ENCODE measurements at regions of chr5 and their contacts with region 1.

Region 1: DNA sequence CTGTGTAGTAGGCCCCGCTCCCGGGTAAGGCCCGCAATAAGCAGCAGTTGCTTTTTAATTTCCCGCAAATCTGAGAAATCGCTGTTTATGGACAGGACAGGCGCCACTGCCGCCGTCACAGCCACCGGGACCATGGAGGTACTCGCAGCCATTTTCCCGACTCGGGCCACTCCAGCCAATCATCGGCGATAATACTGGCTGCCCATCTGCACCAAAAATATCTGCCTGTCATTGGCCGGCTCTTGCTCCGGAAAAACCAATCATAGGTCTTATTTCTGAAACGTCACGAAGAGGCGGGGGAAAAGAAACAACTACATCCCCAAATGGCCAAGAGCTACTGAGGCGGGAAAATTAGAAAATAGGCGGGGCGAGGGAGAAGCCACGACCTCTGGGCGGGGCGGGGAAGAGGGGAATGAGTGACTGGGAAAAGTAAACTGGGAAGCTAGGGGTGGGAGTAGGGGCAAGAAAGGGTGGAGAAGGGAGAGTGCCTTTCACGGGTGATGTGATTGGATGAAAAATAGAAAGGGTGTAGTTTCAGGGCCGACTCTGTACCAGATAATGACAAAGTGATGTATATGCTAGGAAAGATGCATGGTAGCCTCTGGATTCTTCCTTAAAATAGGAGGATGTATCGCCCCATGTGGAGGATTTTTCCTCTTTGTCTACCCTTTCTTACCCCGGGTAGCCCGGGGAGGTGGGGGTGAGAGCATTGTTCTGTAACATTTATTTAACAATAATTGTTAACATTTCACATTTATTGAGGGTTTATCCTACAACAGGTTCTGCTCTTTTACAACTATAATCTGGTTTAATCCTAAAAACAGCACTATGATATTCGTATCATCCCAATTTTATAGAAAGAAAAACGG is at the start of gene CDC23:
- DNase-seq: peak; percentile 100
- H3K4me3 Mint-ChIP-seq: peak within 1 kb of the TSS; percentile 98
- H3K27ac Mint-ChIP-seq: peak within 1 kb of the TSS; percentile 99
- H3K4me1 Mint-ChIP-seq: peaks cover 18% of the 10 kb centered on the region
- H3K27me3 Mint-ChIP-seq: no peaks in the 10 kb centered on the region
- CTCF ChIP-seq: no peak
- total RNA-seq, gene CDC23: 49.7 and 67.1 TPM in 2 replicates

Region 2: DNA sequence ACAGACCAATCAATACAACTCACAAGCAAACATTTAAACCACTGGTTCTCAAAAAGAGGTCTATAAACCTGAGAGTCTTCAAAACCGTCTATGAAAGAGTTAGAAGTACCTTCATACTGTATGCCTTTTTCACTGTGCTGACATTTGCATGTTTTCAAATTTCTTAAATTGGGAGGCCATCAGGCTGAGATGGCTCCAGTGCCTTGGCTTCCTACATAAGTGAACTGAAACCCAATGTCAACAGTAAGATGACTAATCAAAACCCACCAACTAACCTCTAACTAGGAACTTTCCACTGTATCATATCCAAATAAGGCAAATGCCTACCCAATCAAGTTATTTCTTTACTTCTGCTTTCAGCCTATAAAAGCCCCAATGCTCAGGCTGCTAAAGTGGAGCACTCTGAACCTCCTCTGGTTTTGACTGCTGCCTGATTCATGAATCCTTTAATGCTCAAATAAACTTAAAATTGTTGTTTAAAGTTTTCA is 215.6 kb before region 1 on chr5:
- CTCF ChIA-PET with region 1: no interaction called
- POLR2A ChIA-PET with region 1: no interaction called
- intact Hi-C with region 1: no loop called
- DNase-seq: peak; percentile 18
- H3K4me3 Mint-ChIP-seq: no peak overlapping the region
- H3K27ac Mint-ChIP-seq: no peak overlapping the region
- H3K4me1 Mint-ChIP-seq: peaks cover 26% of the 10 kb centered on the region
- H3K27me3 Mint-ChIP-seq: no peaks in the 10 kb centered on the region
- CTCF ChIP-seq: no peak

Region 3: GRCh38 chr5:138102454-138103318 is 110.7 kb before region 1 on chr5:
- CTCF ChIA-PET with region 1: no interaction called
- POLR2A ChIA-PET with region 1: no interaction called
- intact Hi-C with region 1: no loop called
- DNase-seq: no peak
- H3K4me3 Mint-ChIP-seq: no peak overlapping the region
- H3K27ac Mint-ChIP-seq: no peak overlapping the region
- H3K4me1 Mint-ChIP-seq: no peaks in the 10 kb centered on the region
- H3K27me3 Mint-ChIP-seq: peaks cover 41% of the 10 kb centered on the region
- CTCF ChIP-seq: no peak

Region 4: GRCh38 chr5:138331449-138332368 is 118.3 kb after region 1 on chr5 and contains the start of gene CDC25C:
- CTCF ChIA-PET with region 1: no interaction called
- POLR2A ChIA-PET with region 1: interaction called, 11 read pairs
- intact Hi-C with region 1: loop called (anchors 2 kb)
- DNase-seq: peak; percentile 100
- H3K4me3 Mint-ChIP-seq: peak within 1 kb of the TSS; percentile 94
- H3K27ac Mint-ChIP-seq: peak within 1 kb of the TSS; percentile 87
- H3K4me1 Mint-ChIP-seq: peaks cover 37% of the 10 kb centered on the region
- H3K27me3 Mint-ChIP-seq: no peaks in the 10 kb centered on the region
- CTCF ChIP-seq: no peak
- total RNA-seq, gene CDC25C: 10.8 and 12.2 TPM in 2 replicates

Region 5: GRCh38 chr5:138337685-138338410 is 124.5 kb after region 1 on chr5 and contains the start of gene FAM53C:
- CTCF ChIA-PET with region 1: interaction called, 4 read pairs
- POLR2A ChIA-PET with region 1: interaction called, 11 read pairs
- intact Hi-C with region 1: loop called (anchors 2 kb)
- DNase-seq: peak; percentile 97
- H3K4me3 Mint-ChIP-seq: peak within 1 kb of the TSS; percentile 88
- H3K27ac Mint-ChIP-seq: peak within 1 kb of the TSS; percentile 100
- H3K4me1 Mint-ChIP-seq: peaks cover 48% of the 10 kb centered on the region
- H3K27me3 Mint-ChIP-seq: no peaks in the 10 kb centered on the region
- CTCF ChIP-seq: no peak
- total RNA-seq, gene FAM53C: 37.2 and 38.9 TPM in 2 replicates

Region 6: GRCh38 chr5:138632900-138633489 is 419.6 kb after region 1 on chr5:
- CTCF ChIA-PET with region 1: no interaction called
- POLR2A ChIA-PET with region 1: no interaction called
- intact Hi-C with region 1: no loop called
- DNase-seq: peak; percentile 95
- H3K4me3 Mint-ChIP-seq: no peak overlapping the region
- H3K27ac Mint-ChIP-seq: no peak overlapping the region
- H3K4me1 Mint-ChIP-seq: peaks cover 6% of the 10 kb centered on the region
- H3K27me3 Mint-ChIP-seq: no peaks in the 10 kb centered on the region
- CTCF ChIP-seq: peak; percentile 52

Measured in MCF 10A (cell line).